ENCODE measurements at regions of chr7 and their contacts with region 1.

Region 1: GRCh38 chr7:112833082-112833481 is 42.9 kb upstream of the TMEM168 start:
- DNase-seq: no peak
- ATAC-seq: no peak
- H3K4me3 ChIP-seq: no peak overlapping the region
- H3K27ac ChIP-seq: no peak overlapping the region
- H3K4me1 ChIP-seq: no peaks in the 10 kb centered on the region
- H3K27me3 ChIP-seq: no peaks in the 10 kb centered on the region
- CTCF ChIP-seq: no peak

Region 2: DNA sequence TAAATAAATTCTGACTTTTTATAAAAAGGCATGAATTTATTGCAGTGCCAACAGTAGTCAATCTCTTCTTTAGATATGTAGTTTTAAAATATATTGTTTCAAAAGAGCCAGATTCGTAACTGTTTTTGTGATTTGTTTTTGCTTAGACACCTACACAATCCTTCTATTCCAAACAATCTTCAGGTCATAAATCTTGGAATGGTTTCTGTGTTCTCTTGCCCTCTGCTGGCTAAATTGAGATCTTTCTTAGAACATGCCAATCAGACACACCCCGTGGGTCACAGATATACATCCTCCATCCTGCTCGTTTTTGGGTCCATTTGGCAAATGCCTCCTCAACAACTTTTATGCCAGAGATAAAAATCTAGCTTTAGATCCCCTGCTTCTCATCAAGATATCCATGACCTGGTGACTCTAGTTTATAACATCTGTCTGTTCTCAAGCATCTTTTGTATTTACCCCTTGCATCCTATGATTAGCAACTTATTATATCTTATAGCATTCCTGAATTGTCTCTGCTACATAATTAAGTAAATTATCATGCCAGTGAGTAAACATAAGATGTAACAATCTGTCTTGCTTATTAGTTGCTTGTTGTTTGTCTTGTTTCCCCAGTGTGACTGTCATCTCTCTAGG is 418.1 kb before region 1 on chr7:
- intact Hi-C with region 1: no loop called
- DNase-seq: no peak
- ATAC-seq: peak; percentile 58 to 90 (median 74)
- H3K4me3 ChIP-seq: no peak overlapping the region
- H3K27ac ChIP-seq: no peak overlapping the region
- H3K4me1 ChIP-seq: no peaks in the 10 kb centered on the region
- H3K27me3 ChIP-seq: no peaks in the 10 kb centered on the region
- CTCF ChIP-seq: peak; percentile 66

Region 3: DNA sequence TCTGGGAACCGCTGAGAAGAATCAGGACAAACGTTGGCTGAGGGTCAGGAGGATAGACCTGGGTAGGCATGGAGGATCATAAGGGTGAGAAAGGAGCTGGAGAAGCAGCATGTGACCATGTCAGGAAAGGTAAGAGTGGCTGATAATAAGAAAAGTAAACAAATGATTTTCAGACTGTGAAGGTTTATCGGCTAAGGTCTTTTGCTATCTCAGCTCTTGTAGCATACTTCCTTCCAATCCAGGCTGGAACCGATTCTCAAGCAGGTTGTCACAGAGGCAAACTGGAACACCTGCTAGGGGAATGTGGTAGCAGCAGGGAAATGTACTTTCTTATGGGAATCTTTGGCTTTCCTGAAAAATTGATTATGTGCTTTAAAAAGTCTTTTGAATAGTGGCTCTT is 117.6 kb before region 1 on chr7:
- intact Hi-C with region 1: no loop called
- DNase-seq: no peak
- ATAC-seq: no peak
- H3K4me3 ChIP-seq: no peak overlapping the region
- H3K27ac ChIP-seq: no peak overlapping the region
- H3K4me1 ChIP-seq: no peaks in the 10 kb centered on the region
- H3K27me3 ChIP-seq: no peaks in the 10 kb centered on the region
- CTCF ChIP-seq: no peak

Region 4: DNA sequence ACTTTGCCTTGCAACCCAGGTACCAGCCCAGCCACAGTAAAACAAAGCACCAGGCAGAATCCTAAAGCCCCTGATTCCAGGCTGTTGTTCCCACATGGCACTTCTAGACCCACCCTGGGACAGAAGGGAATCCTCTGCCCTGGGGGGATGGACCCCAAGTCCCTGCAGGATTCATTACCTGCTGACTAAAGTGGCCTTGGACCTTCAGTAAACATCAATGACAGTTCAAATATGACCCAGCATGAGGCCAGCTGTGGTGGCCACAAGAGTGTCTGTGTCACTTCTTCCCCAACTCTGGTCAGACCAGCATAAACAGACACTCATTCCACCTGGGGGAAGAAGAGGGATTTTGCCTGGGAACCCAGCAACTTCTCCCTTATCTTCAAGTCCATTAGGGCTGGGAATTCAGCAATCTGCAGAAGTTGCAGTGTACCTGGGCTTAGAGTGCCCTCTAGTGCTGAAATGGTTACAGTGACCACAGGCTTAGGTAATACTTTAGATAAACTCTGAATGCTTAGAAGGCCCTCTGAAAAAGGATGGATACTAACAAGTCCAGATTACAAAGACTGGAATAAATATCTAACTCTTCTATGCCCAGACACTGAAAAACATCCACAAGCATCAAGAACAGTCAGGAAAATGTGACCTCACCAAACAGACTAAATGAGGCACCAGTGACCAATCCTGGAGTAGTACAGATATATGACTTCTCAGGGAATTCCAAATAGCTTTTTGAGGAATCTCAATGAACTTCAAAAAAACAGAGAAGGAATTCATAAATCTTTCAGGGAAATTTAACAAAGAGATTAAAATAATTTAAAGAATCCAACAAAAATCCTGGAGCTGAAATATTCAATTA is 65.6 kb after region 1 on chr7:
- intact Hi-C with region 1: loop called in 1 of 2 experiments (anchors 5 kb)
- DNase-seq: no peak
- ATAC-seq: peak; percentile 63 to 84 (median 72)
- H3K4me3 ChIP-seq: no peak overlapping the region
- H3K27ac ChIP-seq: no peak overlapping the region
- H3K4me1 ChIP-seq: no peaks in the 10 kb centered on the region
- H3K27me3 ChIP-seq: no peaks in the 10 kb centered on the region
- CTCF ChIP-seq: peak; percentile 72